ENCODE measurements at regions of chr6 and their contacts with region 1.

Region 1: GRCh38 chr6:2749969-2750600 is 637 bp downstream of the MYLK4 start:
- DNase-seq: peak; percentile 65
- H3K4me3 ChIP-seq: no peak overlapping the region
- H3K27ac ChIP-seq: no peak overlapping the region
- H3K4me1 ChIP-seq: no peaks in the 10 kb centered on the region
- H3K27me3 ChIP-seq: no peaks in the 10 kb centered on the region
- CTCF ChIP-seq: peak; percentile 75 to 85
- POLR2A ChIP-seq: no peak

Region 2: DNA sequence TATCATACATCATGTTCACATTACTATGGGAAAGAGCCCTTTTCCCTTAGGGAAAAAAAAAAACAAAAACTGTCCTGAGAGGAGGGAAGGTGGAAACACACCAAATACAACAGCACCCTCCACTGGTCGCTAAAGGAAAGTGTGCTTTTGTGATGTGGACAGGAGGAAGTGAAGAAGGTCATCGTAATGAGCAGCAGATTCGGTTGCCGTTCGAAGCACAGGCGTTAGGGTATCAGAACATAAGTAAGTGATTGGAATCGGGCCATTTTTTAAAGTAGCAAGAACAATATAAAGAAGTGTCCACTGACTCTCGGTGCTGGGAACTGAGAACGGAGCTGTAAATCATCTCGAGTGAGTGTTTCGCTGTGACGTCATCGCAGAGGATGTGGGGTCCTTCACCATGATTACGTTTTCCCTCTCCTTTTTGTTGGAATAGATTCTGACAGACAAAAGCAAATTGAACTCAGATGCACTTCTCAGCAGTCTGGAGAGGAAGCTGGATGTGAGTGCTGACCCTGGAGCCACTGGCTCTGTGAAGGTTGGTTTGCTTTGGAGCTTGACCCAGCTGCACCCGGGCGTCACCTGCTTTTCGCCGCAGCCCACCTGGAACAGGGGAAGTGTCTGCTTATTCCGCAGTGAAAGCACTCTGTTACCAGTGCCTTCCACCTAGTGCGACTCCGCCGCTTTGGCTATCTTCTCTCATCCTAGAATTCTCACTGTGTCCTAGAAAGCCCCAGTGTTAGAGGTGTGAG is 301.1 kb before region 1 on chr6:
- CTCF ChIA-PET with region 1: no interaction called
- POLR2A ChIA-PET with region 1: no interaction called
- dilution Hi-C with region 1: no loop called
- intact Hi-C with region 1: loop called (anchors 5 kb)
- DNase-seq: peak; percentile 86
- H3K4me3 ChIP-seq: peak overlapping the region in 2 of 3 experiments; percentile 4 to 64
- H3K27ac ChIP-seq: no peak overlapping the region
- H3K4me1 ChIP-seq: peaks cover 4% of the 10 kb centered on the region
- H3K27me3 ChIP-seq: peaks cover under 1 to 2% of the 10 kb centered on the region in 2 experiments
- CTCF ChIP-seq: peak; percentile 60 to 69
- POLR2A ChIP-seq: no peak

Region 3: GRCh38 chr6:2718334-2719092 is 31.6 kb before region 1 on chr6:
- CTCF ChIA-PET with region 1: interaction called, 18 read pairs
- POLR2A ChIA-PET with region 1: no interaction called
- dilution Hi-C with region 1: no loop called
- intact Hi-C with region 1: no loop called
- DNase-seq: peak; percentile 81
- H3K4me3 ChIP-seq: no peak overlapping the region
- H3K27ac ChIP-seq: peak overlapping the region; percentile 89
- H3K4me1 ChIP-seq: peaks cover 23% of the 10 kb centered on the region
- H3K27me3 ChIP-seq: no peaks in the 10 kb centered on the region
- CTCF ChIP-seq: no peak
- POLR2A ChIP-seq: no peak

Region 4: GRCh38 chr6:2725999-2726567 is 24.0 kb before region 1 on chr6:
- CTCF ChIA-PET with region 1: interaction called, 12 read pairs
- POLR2A ChIA-PET with region 1: no interaction called
- dilution Hi-C with region 1: no loop called
- intact Hi-C with region 1: no loop called
- DNase-seq: peak; percentile 68
- H3K4me3 ChIP-seq: no peak overlapping the region
- H3K27ac ChIP-seq: peak overlapping the region; percentile 75
- H3K4me1 ChIP-seq: peaks cover 9% of the 10 kb centered on the region
- H3K27me3 ChIP-seq: no peaks in the 10 kb centered on the region
- CTCF ChIP-seq: no peak
- POLR2A ChIP-seq: no peak

Region 5: GRCh38 chr6:2733324-2733723 is 16.8 kb before region 1 on chr6:
- CTCF ChIA-PET with region 1: interaction called, 116 read pairs
- POLR2A ChIA-PET with region 1: no interaction called
- dilution Hi-C with region 1: no loop called
- intact Hi-C with region 1: loop called (anchors 1 kb)
- DNase-seq: no peak
- H3K4me3 ChIP-seq: no peak overlapping the region
- H3K27ac ChIP-seq: no peak overlapping the region
- H3K4me1 ChIP-seq: no peaks in the 10 kb centered on the region
- H3K27me3 ChIP-seq: no peaks in the 10 kb centered on the region
- CTCF ChIP-seq: no peak
- POLR2A ChIP-seq: no peak

Region 6: DNA sequence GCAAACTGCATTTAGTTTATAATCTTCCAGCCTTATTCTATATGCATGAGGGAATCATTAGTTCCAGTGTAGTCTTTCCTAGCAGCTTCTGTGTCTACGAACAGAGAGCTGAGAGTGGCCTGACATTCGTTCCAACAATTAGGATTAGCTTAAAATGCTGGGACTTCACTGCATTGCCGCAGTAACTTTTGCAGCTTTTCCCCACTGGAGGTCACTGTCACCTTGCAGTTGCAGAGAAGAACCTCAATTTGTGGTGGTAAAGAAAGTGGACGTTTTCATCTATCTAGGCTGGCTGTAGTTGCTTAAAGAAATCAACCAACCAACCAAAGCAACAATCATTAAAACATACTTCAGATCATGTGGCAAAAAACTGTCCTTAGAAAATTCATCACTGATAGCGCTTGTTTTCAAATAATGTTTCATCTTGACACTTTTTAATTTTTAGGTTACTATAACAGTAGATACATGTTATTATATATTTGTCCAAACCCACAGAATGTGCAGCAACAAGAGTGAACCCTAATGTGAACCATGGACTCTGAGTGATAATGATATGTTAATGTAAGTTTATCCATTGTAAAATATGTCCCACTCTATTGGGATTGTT is 11.6 kb before region 1 on chr6:
- CTCF ChIA-PET with region 1: interaction called, 116 read pairs
- POLR2A ChIA-PET with region 1: no interaction called
- dilution Hi-C with region 1: no loop called
- intact Hi-C with region 1: loop called (anchors 1 kb)
- DNase-seq: peak; percentile 72
- H3K4me3 ChIP-seq: no peak overlapping the region
- H3K27ac ChIP-seq: no peak overlapping the region
- H3K4me1 ChIP-seq: no peaks in the 10 kb centered on the region
- H3K27me3 ChIP-seq: no peaks in the 10 kb centered on the region
- CTCF ChIP-seq: peak; percentile 54 to 64
- POLR2A ChIP-seq: no peak

Region 7: GRCh38 chr6:2765166-2765895 is 15.2 kb after region 1 on chr6 and contains the start of gene WRNIP1:
- CTCF ChIA-PET with region 1: interaction called, 62 read pairs
- POLR2A ChIA-PET with region 1: no interaction called
- dilution Hi-C with region 1: no loop called
- intact Hi-C with region 1: no loop called
- DNase-seq: peak; percentile 99
- H3K4me3 ChIP-seq: peak within 1 kb of the TSS; percentile 72 to 98 (median 97)
- H3K27ac ChIP-seq: peak within 1 kb of the TSS; percentile 79
- H3K4me1 ChIP-seq: peaks cover 40% of the 10 kb centered on the region
- H3K27me3 ChIP-seq: no peaks in the 10 kb centered on the region
- CTCF ChIP-seq: peak; percentile 65 to 66
- POLR2A ChIP-seq: no peak
- total RNA-seq, gene WRNIP1: 47.7 and 50.1 TPM in 2 replicates

Region 8: DNA sequence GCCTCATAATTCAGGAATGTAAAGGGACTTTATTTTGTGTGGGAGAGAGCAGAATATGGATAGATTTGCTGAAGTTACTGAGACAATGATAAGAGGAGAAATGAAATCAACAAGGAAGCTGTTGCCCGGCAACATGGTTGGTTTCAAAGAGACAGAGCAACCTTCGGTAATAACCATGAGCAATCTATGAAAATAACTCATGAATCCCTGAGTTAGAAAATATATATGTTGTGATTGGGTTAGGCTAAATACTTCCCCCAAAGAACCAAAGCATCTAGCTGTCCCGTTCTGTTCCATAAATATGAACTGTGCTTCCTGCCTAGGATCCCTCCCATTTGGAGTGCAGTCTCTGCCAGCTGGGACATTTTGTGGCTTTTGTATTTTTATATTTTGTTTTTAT is 68.5 kb after region 1 on chr6:
- CTCF ChIA-PET with region 1: no interaction called
- POLR2A ChIA-PET with region 1: no interaction called
- dilution Hi-C with region 1: no loop called
- intact Hi-C with region 1: no loop called
- DNase-seq: peak; percentile 88
- H3K4me3 ChIP-seq: peak overlapping the region in 1 of 3 experiments; percentile 28
- H3K27ac ChIP-seq: peak overlapping the region; percentile 92
- H3K4me1 ChIP-seq: peaks cover 44% of the 10 kb centered on the region
- H3K27me3 ChIP-seq: no peaks in the 10 kb centered on the region
- CTCF ChIP-seq: no peak
- POLR2A ChIP-seq: no peak

Region 9: DNA sequence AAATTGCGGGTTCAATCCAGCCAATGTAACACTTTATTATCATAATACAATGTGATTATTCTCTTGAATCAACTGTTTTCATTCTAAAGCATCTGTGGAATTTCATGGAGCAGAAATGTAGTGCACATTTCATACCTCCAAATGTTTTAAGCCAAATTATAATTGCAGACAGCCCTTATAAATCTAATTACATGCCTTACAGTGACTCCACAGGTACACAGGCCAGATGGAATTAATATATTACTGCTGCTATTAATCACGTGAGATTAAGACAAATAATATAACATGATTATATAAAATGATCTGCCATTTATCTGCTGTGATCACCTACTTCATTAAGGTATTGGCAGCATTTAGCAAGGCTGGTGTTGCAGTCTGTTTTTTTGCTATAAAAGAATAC is 1395.0 kb after region 1 on chr6:
- CTCF ChIA-PET with region 1: no interaction called
- POLR2A ChIA-PET with region 1: no interaction called
- dilution Hi-C with region 1: no loop called
- intact Hi-C with region 1: no loop called
- DNase-seq: no peak
- H3K4me3 ChIP-seq: no peak overlapping the region
- H3K27ac ChIP-seq: no peak overlapping the region
- H3K4me1 ChIP-seq: no peaks in the 10 kb centered on the region
- H3K27me3 ChIP-seq: no peaks in the 10 kb centered on the region
- CTCF ChIP-seq: no peak
- POLR2A ChIP-seq: no peak